ENCODE measurements at regions of chr5 and their contacts with region 1.

Region 1: DNA sequence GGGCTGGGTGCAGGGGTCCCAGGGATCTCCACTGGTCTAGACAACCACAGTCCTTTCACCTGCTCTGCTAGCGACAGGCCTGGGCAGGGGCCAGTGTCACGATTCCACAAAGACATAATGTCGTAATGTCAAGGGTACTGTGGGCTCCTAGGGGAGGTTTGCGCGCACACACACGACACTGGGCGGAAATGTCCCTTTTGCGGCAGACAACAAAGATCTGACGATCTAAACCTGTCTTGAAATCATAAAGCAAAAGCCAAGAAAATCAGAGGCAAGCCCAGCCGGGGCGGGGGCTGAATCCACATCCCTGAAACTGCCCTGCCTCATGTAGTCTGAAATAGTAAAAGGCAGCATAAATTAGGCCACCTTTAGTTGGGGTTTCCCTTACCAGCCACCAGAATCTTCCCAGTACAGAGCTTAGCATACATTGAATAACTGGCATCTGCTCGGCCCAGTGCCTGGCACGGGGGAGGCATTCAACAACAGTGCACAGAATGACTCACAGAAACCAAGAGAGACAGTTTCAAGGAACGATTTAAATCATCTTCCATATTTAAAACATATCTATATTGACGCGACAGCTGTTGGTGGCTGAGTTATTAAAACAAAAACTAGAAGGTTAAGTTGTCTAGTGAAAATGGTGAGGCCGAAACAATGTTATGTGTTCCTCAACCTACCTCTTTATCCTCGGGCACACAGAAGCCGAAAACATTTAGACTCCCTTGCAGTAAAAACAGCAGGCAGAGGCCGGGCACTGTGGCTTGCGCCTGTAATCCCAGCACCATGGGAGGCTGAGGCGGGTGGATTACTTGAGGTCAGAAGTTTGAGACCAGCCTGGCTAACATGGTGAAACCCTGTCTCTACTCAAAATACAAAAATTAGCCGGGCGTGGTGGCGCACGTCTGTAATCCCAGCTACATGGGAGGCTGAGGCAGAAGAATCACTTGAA is 151.0 kb downstream of the MYO10 start:
- DNase-seq: no peak
- H3K4me3 ChIP-seq: no peak overlapping the region
- H3K27ac ChIP-seq: no peak overlapping the region
- H3K4me1 ChIP-seq: no peaks in the 10 kb centered on the region
- H3K27me3 ChIP-seq: no peaks in the 10 kb centered on the region
- CTCF ChIP-seq: no peak
- POLR2A ChIP-seq: no peak

Region 2: DNA sequence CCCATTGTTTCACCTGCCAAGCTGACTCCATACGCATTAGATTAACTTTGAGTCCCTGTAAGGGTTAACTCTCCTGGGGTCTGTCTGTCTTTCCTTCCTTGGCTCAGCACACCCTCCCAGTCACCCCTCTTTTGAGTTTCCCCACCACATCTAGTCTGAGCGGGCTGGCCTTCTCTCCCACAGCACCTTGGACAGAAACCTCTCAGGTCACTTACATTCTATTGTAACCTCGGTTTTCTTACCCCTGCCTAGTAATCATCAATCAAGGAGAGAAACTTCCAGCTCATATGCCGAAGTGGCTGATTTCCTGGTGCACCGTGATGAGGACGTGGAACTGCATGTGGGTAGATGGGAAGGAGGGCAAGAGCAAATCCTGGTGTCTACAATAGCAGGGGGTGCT is 48.9 kb after region 1 on chr5:
- intact Hi-C with region 1: no loop called
- DNase-seq: no peak
- H3K4me3 ChIP-seq: no peak overlapping the region
- H3K27ac ChIP-seq: no peak overlapping the region
- H3K4me1 ChIP-seq: no peaks in the 10 kb centered on the region
- H3K27me3 ChIP-seq: no peaks in the 10 kb centered on the region
- CTCF ChIP-seq: no peak
- POLR2A ChIP-seq: no peak

Region 3: DNA sequence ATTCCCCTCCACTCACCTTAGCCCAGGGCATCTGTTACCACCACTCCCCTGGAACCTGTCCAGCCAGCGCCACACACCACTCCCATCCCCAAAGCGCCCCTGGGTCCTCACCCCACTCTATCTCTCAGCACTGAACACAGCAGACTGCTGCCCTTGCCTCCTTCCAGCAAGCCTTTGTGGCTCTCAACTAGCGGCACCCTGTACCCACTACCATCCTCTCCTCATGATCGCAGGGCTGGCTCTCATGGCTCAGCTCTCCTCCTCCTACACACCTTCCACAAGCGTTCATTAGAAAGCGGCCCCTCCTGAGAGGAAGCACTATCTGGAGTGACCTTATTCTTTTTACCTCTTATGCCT is 419.0 kb after region 1 on chr5:
- intact Hi-C with region 1: loop called in 1 of 2 experiments (anchors 5 kb)
- DNase-seq: no peak
- H3K4me3 ChIP-seq: no peak overlapping the region
- H3K27ac ChIP-seq: no peak overlapping the region
- H3K4me1 ChIP-seq: no peaks in the 10 kb centered on the region
- H3K27me3 ChIP-seq: peaks cover 6% of the 10 kb centered on the region
- CTCF ChIP-seq: no peak
- POLR2A ChIP-seq: no peak

Measured in adrenal gland (tissue), 19 donors.